ENCODE measurements at regions of chr14 and their contacts with region 1.

Region 1: GRCh38 chr14:50773632-50774541 is 57.1 kb downstream of the NIN start:
- DNase-seq: peak in 3 of 9 experiments; percentile 17 to 42 (median 24)
- ATAC-seq: peak; percentile 64
- H3K4me3 ChIP-seq: no peak overlapping the region
- H3K4me3 Mint-ChIP-seq: no peak overlapping the region
- H3K27ac ChIP-seq: no peak overlapping the region
- H3K27ac Mint-ChIP-seq: peak overlapping the region; percentile 13
- H3K4me1 ChIP-seq: peaks cover 21% of the 10 kb centered on the region
- H3K4me1 Mint-ChIP-seq: peaks cover 29% of the 10 kb centered on the region
- H3K27me3 ChIP-seq: no peaks in the 10 kb centered on the region
- H3K27me3 Mint-ChIP-seq: no peaks in the 10 kb centered on the region
- CTCF ChIP-seq: peak; percentile 70

Region 2: DNA sequence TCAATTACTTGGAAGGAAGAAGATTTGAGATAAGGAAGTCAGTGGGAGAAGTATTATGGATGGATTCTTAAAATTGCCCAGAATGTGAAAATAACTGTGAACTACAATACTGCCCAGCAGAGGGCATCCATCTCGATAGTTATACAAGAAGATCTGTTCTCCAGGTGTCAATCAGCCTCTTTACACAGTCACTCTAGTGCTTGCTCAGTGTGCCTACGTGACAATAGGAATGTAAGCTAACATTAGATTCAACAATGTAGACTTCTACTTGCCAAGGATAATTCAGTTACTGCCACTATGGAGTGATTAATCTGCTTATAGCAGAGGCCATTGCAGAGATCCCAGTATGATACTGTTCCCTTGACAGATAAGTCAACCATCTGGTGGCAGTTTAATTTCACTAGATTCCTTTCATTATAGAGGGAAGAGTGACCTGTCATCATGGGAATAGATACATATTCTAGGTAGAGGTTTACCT is 230.9 kb before region 1 on chr14:
- CTCF ChIA-PET with region 1: interaction called, 10 read pairs
- POLR2A ChIA-PET with region 1: no interaction called
- intact Hi-C with region 1: loop called (anchors 1 to 2 kb)
- DNase-seq: peak in 6 of 9 experiments; percentile 19 to 70 (median 28)
- ATAC-seq: peak; percentile 81
- H3K4me3 ChIP-seq: no peak overlapping the region
- H3K4me3 Mint-ChIP-seq: no peak overlapping the region
- H3K27ac ChIP-seq: no peak overlapping the region
- H3K27ac Mint-ChIP-seq: no peak overlapping the region
- H3K4me1 ChIP-seq: peaks cover 5% of the 10 kb centered on the region
- H3K4me1 Mint-ChIP-seq: peaks cover 11% of the 10 kb centered on the region
- H3K27me3 ChIP-seq: no peaks in the 10 kb centered on the region
- H3K27me3 Mint-ChIP-seq: no peaks in the 10 kb centered on the region
- CTCF ChIP-seq: peak; percentile 47

Region 3: GRCh38 chr14:50619556-50620141 is 154.2 kb before region 1 on chr14:
- CTCF ChIA-PET with region 1: no interaction called
- POLR2A ChIA-PET with region 1: no interaction called
- intact Hi-C with region 1: loop called (anchors 2 to 5 kb)
- DNase-seq: peak in 2 of 9 experiments; percentile 21 to 39
- ATAC-seq: no peak
- H3K4me3 ChIP-seq: no peak overlapping the region
- H3K4me3 Mint-ChIP-seq: no peak overlapping the region
- H3K27ac ChIP-seq: no peak overlapping the region
- H3K27ac Mint-ChIP-seq: no peak overlapping the region
- H3K4me1 ChIP-seq: no peaks in the 10 kb centered on the region
- H3K4me1 Mint-ChIP-seq: no peaks in the 10 kb centered on the region
- H3K27me3 ChIP-seq: no peaks in the 10 kb centered on the region
- H3K27me3 Mint-ChIP-seq: no peaks in the 10 kb centered on the region
- CTCF ChIP-seq: no peak

Region 4: GRCh38 chr14:50736932-50737419 is 36.9 kb before region 1 on chr14:
- CTCF ChIA-PET with region 1: interaction called, 6 read pairs
- POLR2A ChIA-PET with region 1: no interaction called
- intact Hi-C with region 1: loop called in 1 of 2 experiments (anchors 5 kb)
- DNase-seq: peak in 3 of 9 experiments; percentile 22 to 59 (median 25)
- ATAC-seq: peak; percentile 78
- H3K4me3 ChIP-seq: no peak overlapping the region
- H3K4me3 Mint-ChIP-seq: no peak overlapping the region
- H3K27ac ChIP-seq: peak overlapping the region in 1 of 2 experiments; percentile 53
- H3K27ac Mint-ChIP-seq: peak overlapping the region; percentile 62
- H3K4me1 ChIP-seq: no peaks in the 10 kb centered on the region
- H3K4me1 Mint-ChIP-seq: peaks cover 16% of the 10 kb centered on the region
- H3K27me3 ChIP-seq: no peaks in the 10 kb centered on the region
- H3K27me3 Mint-ChIP-seq: no peaks in the 10 kb centered on the region
- CTCF ChIP-seq: no peak

Region 5: DNA sequence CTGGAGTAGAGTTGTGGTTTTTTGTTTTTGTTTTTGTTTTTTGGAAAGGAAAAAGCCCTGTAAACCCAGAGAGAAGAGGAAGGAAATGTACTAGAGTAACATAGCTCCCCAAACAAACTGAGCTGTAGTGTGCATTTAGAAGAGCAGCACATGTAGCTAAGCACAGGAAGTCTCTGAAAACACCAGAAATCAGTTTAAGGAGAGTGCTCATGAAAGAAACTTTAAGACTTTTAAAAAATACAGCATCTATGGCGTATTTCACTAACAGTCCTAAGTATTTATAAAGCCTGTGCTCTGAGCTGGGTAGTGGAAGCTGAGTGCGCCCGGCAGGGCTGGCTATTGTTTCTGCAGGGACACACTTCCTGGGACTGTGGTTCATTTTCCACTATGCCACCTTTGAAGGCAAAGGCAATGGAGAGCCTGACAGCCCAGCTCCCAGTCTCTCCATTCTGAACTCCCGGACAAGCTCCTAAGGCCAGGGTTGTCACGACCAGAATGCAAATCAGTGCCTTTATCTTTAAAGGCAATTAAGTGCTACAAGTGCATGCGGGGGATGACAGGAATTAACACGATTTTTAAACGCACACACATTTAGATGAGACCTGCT is 11.7 kb after region 1 on chr14:
- CTCF ChIA-PET with region 1: interaction called, 109 read pairs
- POLR2A ChIA-PET with region 1: interaction called, 9 read pairs
- intact Hi-C with region 1: no loop called
- DNase-seq: peak in 2 of 9 experiments; percentile 23 to 56
- ATAC-seq: peak; percentile 52
- H3K4me3 ChIP-seq: peak overlapping the region; percentile 3 to 32
- H3K4me3 Mint-ChIP-seq: peak overlapping the region; percentile 74
- H3K27ac ChIP-seq: peak overlapping the region; percentile 32 to 58
- H3K27ac Mint-ChIP-seq: peak overlapping the region; percentile 92
- H3K4me1 ChIP-seq: peaks cover 75% of the 10 kb centered on the region
- H3K4me1 Mint-ChIP-seq: peaks cover 96% of the 10 kb centered on the region
- H3K27me3 ChIP-seq: no peaks in the 10 kb centered on the region
- H3K27me3 Mint-ChIP-seq: no peaks in the 10 kb centered on the region
- CTCF ChIP-seq: no peak

Region 6: GRCh38 chr14:50823051-50823761 is 49.3 kb after region 1 on chr14:
- CTCF ChIA-PET with region 1: interaction called, 34 read pairs
- POLR2A ChIA-PET with region 1: interaction called, 4 read pairs
- intact Hi-C with region 1: no loop called
- DNase-seq: peak in 2 of 9 experiments; percentile 13 to 36
- ATAC-seq: no peak
- H3K4me3 ChIP-seq: peak overlapping the region; percentile 21 to 28
- H3K4me3 Mint-ChIP-seq: peak overlapping the region; percentile 79
- H3K27ac ChIP-seq: peak overlapping the region; percentile 54 to 64
- H3K27ac Mint-ChIP-seq: peak overlapping the region; percentile 98
- H3K4me1 ChIP-seq: peaks cover 93% of the 10 kb centered on the region
- H3K4me1 Mint-ChIP-seq: peaks cover 91% of the 10 kb centered on the region
- H3K27me3 ChIP-seq: no peaks in the 10 kb centered on the region
- H3K27me3 Mint-ChIP-seq: no peaks in the 10 kb centered on the region
- CTCF ChIP-seq: no peak

Region 7: GRCh38 chr14:50882953-50883826 is 109.3 kb after region 1 on chr14:
- CTCF ChIA-PET with region 1: no interaction called
- POLR2A ChIA-PET with region 1: no interaction called
- intact Hi-C with region 1: no loop called
- DNase-seq: no peak
- ATAC-seq: no peak
- H3K4me3 ChIP-seq: no peak overlapping the region
- H3K4me3 Mint-ChIP-seq: no peak overlapping the region
- H3K27ac ChIP-seq: no peak overlapping the region
- H3K27ac Mint-ChIP-seq: no peak overlapping the region
- H3K4me1 ChIP-seq: no peaks in the 10 kb centered on the region
- H3K4me1 Mint-ChIP-seq: no peaks in the 10 kb centered on the region
- H3K27me3 ChIP-seq: peaks cover 0 to 3% of the 10 kb centered on the region in 2 experiments
- H3K27me3 Mint-ChIP-seq: peaks cover 20% of the 10 kb centered on the region
- CTCF ChIP-seq: no peak